Breast epithelium (tissue), 4 donors: ENCODE measurements at regions of chr16 and their contacts with region 1.

Region 1: GRCh38 chr16:13680021-13680889 is 239.7 kb upstream of the ERCC4 start:
- DNase-seq: no peak
- H3K4me3 ChIP-seq: no peak overlapping the region
- H3K27ac ChIP-seq: no peak overlapping the region
- H3K4me1 ChIP-seq: no peaks in the 10 kb centered on the region
- H3K27me3 ChIP-seq: peaks cover 0 to 5% of the 10 kb centered on the region in 2 donors
- CTCF ChIP-seq: no peak
- POLR2A ChIP-seq: no peak

Region 2: GRCh38 chr16:13742928-13743327 is 62.7 kb after region 1 on chr16:
- intact Hi-C with region 1: loop called (anchors 2 kb)
- DNase-seq: no peak
- H3K4me3 ChIP-seq: no peak overlapping the region
- H3K27ac ChIP-seq: no peak overlapping the region
- H3K4me1 ChIP-seq: no peaks in the 10 kb centered on the region
- H3K27me3 ChIP-seq: no peaks in the 10 kb centered on the region
- CTCF ChIP-seq: no peak
- POLR2A ChIP-seq: no peak

Region 3: DNA sequence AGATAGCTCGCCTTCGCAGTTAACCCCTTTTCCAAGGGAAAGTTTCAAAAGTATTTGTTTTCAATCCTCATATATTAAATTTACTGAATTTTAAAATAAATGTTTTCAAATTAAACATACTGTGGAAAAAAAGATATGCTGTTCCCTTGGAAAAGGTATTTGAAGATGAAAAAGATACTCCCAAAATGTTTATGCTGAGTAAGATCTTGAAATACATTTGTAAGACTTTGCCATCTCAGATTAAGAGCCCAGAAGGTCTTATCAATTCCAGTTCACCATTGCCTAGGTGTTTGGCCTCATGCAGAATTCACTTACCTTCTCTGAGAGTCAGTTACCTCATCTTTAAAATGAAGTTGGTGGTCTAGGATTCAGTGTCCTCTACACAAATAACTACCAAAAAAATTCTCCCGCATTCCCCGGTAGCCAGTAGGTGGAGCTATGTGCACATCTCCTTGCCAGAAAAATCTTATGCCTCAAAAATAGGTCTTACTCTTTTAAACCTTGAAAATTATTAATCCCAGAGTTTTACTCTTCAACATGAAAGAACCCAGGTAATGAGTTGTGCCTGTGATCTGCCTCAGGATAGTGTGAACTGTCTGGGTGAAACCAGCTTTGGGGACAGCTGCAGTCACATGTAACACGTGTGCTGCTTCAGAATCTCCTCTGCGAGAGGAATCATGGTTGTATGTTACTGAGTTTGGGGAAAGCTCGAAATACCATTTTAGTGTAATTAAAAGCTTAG is 569.2 kb after region 1 on chr16:
- intact Hi-C with region 1: no loop called
- DNase-seq: no peak
- H3K4me3 ChIP-seq: no peak overlapping the region
- H3K27ac ChIP-seq: no peak overlapping the region
- H3K4me1 ChIP-seq: no peaks in the 10 kb centered on the region
- H3K27me3 ChIP-seq: no peaks in the 10 kb centered on the region
- CTCF ChIP-seq: peak; percentile 18 to 62 (median 53)
- POLR2A ChIP-seq: no peak